Gastrocnemius medialis (tissue), 4 donors: ENCODE measurements at regions of chr10 and their contacts with region 1.

Region 1: GRCh38 chr10:62594093-62594520 is 210.4 kb upstream of the ADO start:
- DNase-seq: peak; percentile 12 to 27
- ATAC-seq: peak; percentile 74 to 88
- H3K4me3 ChIP-seq: no peak overlapping the region
- H3K27ac ChIP-seq: no peak overlapping the region
- H3K4me1 ChIP-seq: no peaks in the 10 kb centered on the region
- H3K27me3 ChIP-seq: no peaks in the 10 kb centered on the region
- CTCF ChIP-seq: peak; percentile 61 to 76 (median 73)
- POLR2A ChIP-seq: no peak

Region 2: DNA sequence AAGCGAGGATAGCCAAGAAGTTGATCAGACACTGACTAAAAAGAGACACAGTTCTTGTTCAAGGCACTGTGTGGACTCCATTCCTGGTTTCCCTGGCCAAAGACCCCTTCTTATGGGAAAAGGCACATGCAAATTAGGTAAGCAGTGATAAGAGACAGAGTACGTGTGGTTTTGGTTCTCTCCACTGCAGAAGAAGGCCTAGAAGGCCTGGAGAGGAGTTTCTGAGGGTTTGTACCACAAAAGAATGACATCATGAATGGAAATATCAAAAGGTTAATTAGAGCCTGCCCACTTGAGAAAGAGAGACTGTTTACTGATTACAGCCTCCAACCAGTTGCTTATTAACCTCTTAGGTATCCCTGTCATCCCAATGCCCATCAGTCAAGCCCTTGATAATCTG is 82.5 kb before region 1 on chr10:
- in situ Hi-C with region 1: no loop called
- intact Hi-C with region 1: no loop called
- DNase-seq: no peak
- ATAC-seq: no peak
- H3K4me3 ChIP-seq: no peak overlapping the region
- H3K27ac ChIP-seq: no peak overlapping the region
- H3K4me1 ChIP-seq: no peaks in the 10 kb centered on the region
- H3K27me3 ChIP-seq: no peaks in the 10 kb centered on the region
- CTCF ChIP-seq: no peak
- POLR2A ChIP-seq: no peak

Region 3: DNA sequence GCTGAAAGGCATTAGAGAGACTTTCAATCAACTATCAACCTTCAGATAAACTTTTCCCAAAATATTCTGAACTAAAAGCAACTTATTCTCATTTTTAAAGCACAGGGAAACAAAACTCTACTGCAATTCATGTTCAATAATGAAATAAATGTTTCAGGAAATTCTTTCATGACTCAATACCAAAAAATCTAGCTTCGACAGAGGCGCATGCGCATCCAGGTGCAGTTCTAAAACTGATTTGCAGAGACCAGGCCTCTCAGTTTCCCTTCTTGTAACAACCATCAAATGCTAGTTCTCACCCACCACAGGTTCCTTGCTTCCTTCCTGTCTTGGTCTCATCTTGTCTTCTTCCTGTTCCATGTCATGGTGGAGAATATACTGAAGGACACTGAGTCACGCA is 483.7 kb after region 1 on chr10:
- in situ Hi-C with region 1: loop called in 2 of 4 experiments (anchors 5 to 10 kb)
- intact Hi-C with region 1: no loop called
- DNase-seq: no peak
- ATAC-seq: no peak
- H3K4me3 ChIP-seq: no peak overlapping the region
- H3K27ac ChIP-seq: no peak overlapping the region
- H3K4me1 ChIP-seq: no peaks in the 10 kb centered on the region
- H3K27me3 ChIP-seq: no peaks in the 10 kb centered on the region
- CTCF ChIP-seq: no peak
- POLR2A ChIP-seq: no peak